Activated T-helper 1 cell treated with anti-CD3 and anti-CD28 coated beads, Interleukin-12 subunit alpha, Interleukin-12 subunit beta, Interleukin-2, Interleukin-4 antibody, amounts not matched to agents 30 ng/mL and 10 ng/mL and 1 ng/mL, durations not matched to agents 14 hours and 24 hours and 36 hours (primary cell): ENCODE measurements at regions of chr10 and their contacts with region 1.

Region 1: DNA sequence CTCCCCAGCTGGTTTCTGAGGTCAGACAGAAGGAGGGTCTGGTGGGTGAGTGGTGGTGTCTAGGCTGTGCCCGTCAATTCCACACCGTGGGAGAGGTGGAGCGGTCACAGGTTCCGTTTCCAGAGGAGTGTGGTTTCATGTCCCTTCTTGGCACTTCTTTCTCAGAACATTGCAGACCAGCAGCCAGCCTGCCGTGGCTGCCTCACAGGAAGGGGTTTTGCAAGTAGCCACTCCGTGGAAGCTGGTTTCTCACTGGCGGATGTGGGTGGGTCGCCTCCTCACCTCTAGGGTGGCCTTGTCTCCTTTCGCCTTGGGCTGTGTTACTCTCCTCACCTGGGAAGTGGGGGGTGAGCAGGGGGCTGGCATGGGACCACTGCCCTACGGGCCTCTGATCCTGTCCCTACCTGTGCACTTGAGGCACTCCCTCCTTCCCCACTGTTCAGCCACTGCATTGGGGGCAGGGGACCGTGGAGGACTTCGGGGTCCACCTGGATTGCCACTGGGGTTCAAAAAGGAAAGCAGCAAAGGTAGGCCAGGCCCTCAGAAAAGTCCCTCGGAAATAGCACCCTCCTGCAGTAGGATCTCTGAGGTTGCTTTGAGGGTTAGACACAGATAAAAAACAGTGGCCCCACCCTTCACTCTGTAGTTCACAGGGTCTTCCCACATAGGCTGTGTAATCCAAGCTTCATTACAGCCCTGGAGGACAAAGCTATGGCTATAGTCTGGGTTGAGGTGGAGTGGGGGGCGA is 33.9 kb downstream of the TSPAN14 start:
- DNase-seq: peak; percentile 63
- H3K4me3 Mint-ChIP-seq: peak overlapping the region; percentile 71
- H3K27ac Mint-ChIP-seq: peak overlapping the region; percentile 92
- H3K4me1 Mint-ChIP-seq: peaks cover 98% of the 10 kb centered on the region
- H3K27me3 Mint-ChIP-seq: no peaks in the 10 kb centered on the region

Region 2: GRCh38 chr10:80413271-80413996 is 74.5 kb before region 1 on chr10:
- intact Hi-C with region 1: no loop called
- DNase-seq: no peak
- H3K4me3 Mint-ChIP-seq: no peak overlapping the region
- H3K27ac Mint-ChIP-seq: peak overlapping the region; percentile 35
- H3K4me1 Mint-ChIP-seq: peaks cover 21% of the 10 kb centered on the region
- H3K27me3 Mint-ChIP-seq: no peaks in the 10 kb centered on the region

Region 3: DNA sequence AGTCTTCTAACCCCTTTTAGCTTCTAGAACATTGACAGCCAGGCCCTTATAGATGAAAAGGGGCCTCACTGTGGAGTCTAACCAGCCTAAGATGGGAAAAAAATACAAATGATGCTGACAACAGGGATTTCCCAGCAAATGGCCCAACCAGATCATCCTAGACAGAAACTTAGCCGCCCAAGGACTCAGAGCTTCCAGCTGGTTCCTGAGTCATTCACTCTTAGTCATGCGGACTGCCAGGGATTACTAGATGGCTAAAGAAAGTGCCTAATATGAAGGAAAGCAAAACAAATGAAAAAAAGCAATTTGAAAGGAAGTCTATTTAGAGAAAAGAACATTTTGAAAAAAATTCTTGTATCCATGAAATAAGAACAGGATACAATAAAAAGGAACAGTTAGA is 10.2 kb before region 1 on chr10:
- intact Hi-C with region 1: no loop called
- DNase-seq: no peak
- H3K4me3 Mint-ChIP-seq: no peak overlapping the region
- H3K27ac Mint-ChIP-seq: peak overlapping the region; percentile 26
- H3K4me1 Mint-ChIP-seq: peaks cover 55% of the 10 kb centered on the region
- H3K27me3 Mint-ChIP-seq: no peaks in the 10 kb centered on the region

Region 4: DNA sequence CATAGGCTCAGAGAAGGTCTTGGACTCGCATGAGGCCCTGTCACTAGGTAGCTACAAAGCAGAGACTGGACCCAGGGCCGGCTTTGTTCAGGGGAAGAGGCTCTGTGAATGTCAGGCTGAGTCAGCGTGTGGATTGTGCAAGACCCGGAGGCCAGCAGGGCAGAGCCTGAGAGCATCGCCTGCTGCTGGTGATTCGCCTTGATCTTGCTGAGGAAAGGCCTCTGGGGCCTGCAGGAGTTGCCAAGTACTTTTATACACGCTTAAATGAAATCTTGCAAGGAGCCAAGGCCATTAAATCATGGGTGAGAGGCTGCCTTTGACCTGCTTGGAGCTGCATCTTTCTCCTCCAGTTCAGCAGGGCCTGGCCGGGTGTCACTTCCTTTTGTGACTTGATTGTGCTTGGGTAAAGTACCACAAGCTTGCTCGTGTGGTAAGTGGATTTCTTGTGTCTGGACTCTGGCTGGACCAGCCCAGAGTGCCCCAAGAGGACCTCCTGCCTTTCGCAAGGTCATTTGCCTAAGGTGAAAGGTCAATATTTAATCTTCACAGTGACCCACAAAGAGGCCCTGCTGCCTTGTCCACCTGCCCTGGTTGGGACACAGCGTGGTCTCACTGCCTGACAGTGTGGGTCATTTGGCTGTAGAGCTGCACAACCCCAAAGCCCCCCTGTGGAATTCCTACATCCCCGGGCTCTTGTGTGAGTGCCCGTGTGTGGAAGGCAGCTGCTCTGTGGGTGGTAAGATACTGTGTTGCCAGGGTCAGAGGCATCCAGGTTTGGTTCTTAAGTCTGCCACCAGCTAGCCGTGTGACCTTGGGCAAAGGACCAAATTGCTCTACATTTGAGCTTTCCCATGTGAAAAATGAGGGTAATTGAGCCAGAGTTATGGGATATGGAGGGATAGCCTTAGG is 11.1 kb after region 1 on chr10:
- intact Hi-C with region 1: loop called (anchors 1 kb)
- DNase-seq: peak; percentile 40
- H3K4me3 Mint-ChIP-seq: peak overlapping the region; percentile 74
- H3K27ac Mint-ChIP-seq: peak overlapping the region; percentile 89
- H3K4me1 Mint-ChIP-seq: peaks cover 92% of the 10 kb centered on the region
- H3K27me3 Mint-ChIP-seq: no peaks in the 10 kb centered on the region